ENCODE measurements at regions of chr2 and their contacts with region 1.

Region 1: DNA sequence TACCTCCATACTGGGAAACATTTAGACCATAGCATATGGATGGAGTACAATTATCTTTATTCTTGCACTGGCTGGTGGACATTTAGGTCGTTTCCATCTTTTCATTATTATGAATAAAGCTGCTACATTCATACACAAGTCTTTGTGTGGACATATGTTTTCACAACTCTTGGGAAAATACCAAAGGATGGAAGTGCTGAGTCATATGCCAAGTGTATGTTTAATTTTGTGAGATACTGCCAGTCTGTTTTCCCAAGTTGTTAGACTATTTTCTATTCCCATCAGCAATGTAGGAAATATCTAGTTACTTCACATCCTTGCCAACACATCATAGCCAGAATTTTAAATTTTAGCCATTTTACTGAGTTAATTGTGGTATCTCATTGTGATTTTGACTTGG is 91.5 kb downstream of the GALNT13 start:
- DNase-seq: no peak
- ATAC-seq: no peak
- H3K4me3 ChIP-seq: no peak overlapping the region
- H3K27ac ChIP-seq: no peak overlapping the region
- H3K4me1 ChIP-seq: no peaks in the 10 kb centered on the region
- H3K27me3 ChIP-seq: no peaks in the 10 kb centered on the region
- CTCF ChIP-seq: no peak

Region 2: GRCh38 chr2:154291511-154291910 is 328.3 kb after region 1 on chr2:
- CTCF ChIA-PET with region 1: no interaction called
- POLR2A ChIA-PET with region 1: no interaction called
- in situ Hi-C with region 1: no loop called
- intact Hi-C with region 1: no loop called
- DNase-seq: no peak
- ATAC-seq: no peak
- H3K4me3 ChIP-seq: no peak overlapping the region
- H3K27ac ChIP-seq: no peak overlapping the region
- H3K4me1 ChIP-seq: no peaks in the 10 kb centered on the region
- H3K27me3 ChIP-seq: no peaks in the 10 kb centered on the region
- CTCF ChIP-seq: no peak

Region 3: GRCh38 chr2:155574941-155575340 is 1611.7 kb after region 1 on chr2:
- CTCF ChIA-PET with region 1: no interaction called
- POLR2A ChIA-PET with region 1: no interaction called
- in situ Hi-C with region 1: no loop called
- intact Hi-C with region 1: loop called (anchors 5 kb)
- DNase-seq: no peak
- ATAC-seq: no peak
- H3K4me3 ChIP-seq: no peak overlapping the region
- H3K27ac ChIP-seq: no peak overlapping the region
- H3K4me1 ChIP-seq: no peaks in the 10 kb centered on the region
- H3K27me3 ChIP-seq: no peaks in the 10 kb centered on the region
- CTCF ChIP-seq: no peak

Measured in Panc1 (cell line).